ENCODE measurements at regions of chr1 and their contacts with region 1.

Region 1: GRCh38 chr1:114346480-114347029 is 164.4 kb downstream of the TRIM33 start:
- DNase-seq: peak; percentile 97
- ATAC-seq: peak; percentile 98
- H3K4me3 Mint-ChIP-seq: peak overlapping the region; percentile 70
- H3K27ac Mint-ChIP-seq: peak overlapping the region; percentile 96
- H3K4me1 Mint-ChIP-seq: peaks cover 39% of the 10 kb centered on the region
- H3K27me3 Mint-ChIP-seq: no peaks in the 10 kb centered on the region

Region 2: GRCh38 chr1:113978863-113979702 is 367.5 kb before region 1 on chr1 and contains the start of gene OLFML3:
- CTCF ChIA-PET with region 1: interaction called, 10 read pairs
- DNase-seq: peak; percentile 76
- ATAC-seq: no peak
- H3K4me3 Mint-ChIP-seq: no peak within 1 kb of the TSS
- H3K27ac Mint-ChIP-seq: no peak within 1 kb of the TSS
- H3K4me1 Mint-ChIP-seq: peaks cover 46% of the 10 kb centered on the region
- H3K27me3 Mint-ChIP-seq: no peaks in the 10 kb centered on the region
- total RNA-seq, gene OLFML3: 0.26 to 0.29 TPM

Region 3: GRCh38 chr1:114320586-114320985 is 26.0 kb before region 1 on chr1:
- CTCF ChIA-PET with region 1: interaction called, 107 read pairs
- DNase-seq: no peak
- ATAC-seq: no peak
- H3K4me3 Mint-ChIP-seq: no peak overlapping the region
- H3K27ac Mint-ChIP-seq: no peak overlapping the region
- H3K4me1 Mint-ChIP-seq: no peaks in the 10 kb centered on the region
- H3K27me3 Mint-ChIP-seq: no peaks in the 10 kb centered on the region

Region 4: GRCh38 chr1:114330451-114330983 is 16.0 kb before region 1 on chr1:
- CTCF ChIA-PET with region 1: interaction called, 107 read pairs
- DNase-seq: peak; percentile 78
- ATAC-seq: peak; percentile 84
- H3K4me3 Mint-ChIP-seq: no peak overlapping the region
- H3K27ac Mint-ChIP-seq: peak overlapping the region; percentile 6
- H3K4me1 Mint-ChIP-seq: peaks cover 58% of the 10 kb centered on the region
- H3K27me3 Mint-ChIP-seq: peaks cover 6% of the 10 kb centered on the region

Region 5: GRCh38 chr1:114428083-114428749 is 81.7 kb after region 1 on chr1:
- CTCF ChIA-PET with region 1: interaction called, 17 read pairs
- DNase-seq: no peak
- ATAC-seq: no peak
- H3K4me3 Mint-ChIP-seq: no peak overlapping the region
- H3K27ac Mint-ChIP-seq: no peak overlapping the region
- H3K4me1 Mint-ChIP-seq: peaks cover 3% of the 10 kb centered on the region
- H3K27me3 Mint-ChIP-seq: no peaks in the 10 kb centered on the region

Region 6: DNA sequence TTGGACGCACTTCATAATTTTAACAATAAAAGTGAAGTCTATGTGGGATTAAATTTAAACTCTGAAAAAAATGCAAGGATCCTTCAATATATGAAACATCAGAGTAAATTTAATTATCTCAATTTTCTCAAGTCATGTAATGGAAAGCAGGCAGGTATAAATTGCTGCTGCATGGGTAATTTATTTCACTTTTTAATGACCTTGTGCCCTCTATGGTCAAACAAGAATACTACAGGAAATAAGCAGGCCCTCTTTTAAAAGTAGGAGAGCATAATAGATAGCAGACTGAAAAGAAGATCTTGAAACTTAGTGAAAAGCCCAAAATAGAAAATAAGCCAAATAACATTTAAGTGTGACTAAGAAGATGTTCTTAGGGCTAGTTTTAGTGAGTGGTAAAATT is 212.0 kb after region 1 on chr1:
- CTCF ChIA-PET with region 1: interaction called, 10 read pairs
- DNase-seq: no peak
- ATAC-seq: no peak
- H3K4me3 Mint-ChIP-seq: no peak overlapping the region
- H3K27ac Mint-ChIP-seq: no peak overlapping the region
- H3K4me1 Mint-ChIP-seq: no peaks in the 10 kb centered on the region
- H3K27me3 Mint-ChIP-seq: no peaks in the 10 kb centered on the region

Measured in activated CD8-positive, alpha-beta memory T cell treated with anti-CD3 and anti-CD28 coated beads, Interleukin-2, amount 10 ng/mL, durations not matched to agents 7 days and 5 days (primary cell).